ENCODE measurements at regions of chr3 and their contacts with region 1.

Region 1: GRCh38 chr3:43549626-43550290 is 72.1 kb downstream of the ANO10 start:
- DNase-seq: no peak
- ATAC-seq: no peak
- H3K4me3 Mint-ChIP-seq: no peak overlapping the region
- H3K27ac Mint-ChIP-seq: no peak overlapping the region
- H3K4me1 Mint-ChIP-seq: no peaks in the 10 kb centered on the region
- H3K27me3 Mint-ChIP-seq: no peaks in the 10 kb centered on the region
- CTCF ChIP-seq: no peak

Region 2: DNA sequence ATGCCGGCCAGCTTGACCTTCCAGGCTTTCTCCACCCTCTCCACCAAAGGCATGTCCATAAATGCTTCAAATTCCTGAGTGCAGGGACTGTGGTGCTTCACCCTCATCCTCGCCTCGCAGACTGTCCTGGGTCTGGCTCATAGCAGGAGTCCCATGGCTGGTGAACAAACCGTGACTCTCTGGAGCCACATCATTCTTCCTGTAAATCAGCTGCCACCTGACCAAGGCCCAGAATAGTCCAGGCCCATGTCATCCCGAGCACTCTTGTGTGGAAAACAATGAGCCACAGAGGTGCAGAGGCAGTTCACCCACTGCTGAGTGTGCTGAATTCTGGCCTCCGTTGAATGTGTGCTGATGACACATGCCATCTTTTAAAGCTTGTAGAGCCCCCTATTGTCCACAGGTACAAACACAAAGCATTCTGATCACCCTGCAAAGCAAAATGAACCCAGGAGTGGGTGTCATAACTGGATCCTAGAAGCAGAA is 209.6 kb after region 1 on chr3:
- CTCF ChIA-PET with region 1: no interaction called
- POLR2A ChIA-PET with region 1: no interaction called
- intact Hi-C with region 1: loop called (anchors 5 kb)
- DNase-seq: peak; percentile 14
- ATAC-seq: peak; percentile 60
- H3K4me3 Mint-ChIP-seq: no peak overlapping the region
- H3K27ac Mint-ChIP-seq: no peak overlapping the region
- H3K4me1 Mint-ChIP-seq: peaks cover 36% of the 10 kb centered on the region
- H3K27me3 Mint-ChIP-seq: no peaks in the 10 kb centered on the region
- CTCF ChIP-seq: peak; percentile 24